MCF 10A (cell line): ENCODE measurements at regions of chr12 and their contacts with region 1.

Region 1: GRCh38 chr12:65948320-65949008 is 124.2 kb downstream of the HMGA2 start:
- DNase-seq: peak; percentile 98
- H3K4me3 Mint-ChIP-seq: peak overlapping the region; percentile 68
- H3K27ac Mint-ChIP-seq: peak overlapping the region; percentile 96
- H3K4me1 Mint-ChIP-seq: peaks cover 63% of the 10 kb centered on the region
- H3K27me3 Mint-ChIP-seq: no peaks in the 10 kb centered on the region
- CTCF ChIP-seq: no peak

Region 2: GRCh38 chr12:65830305-65830704 is 118.2 kb before region 1 on chr12:
- CTCF ChIA-PET with region 1: no interaction called
- POLR2A ChIA-PET with region 1: interaction called, 12 read pairs
- intact Hi-C with region 1: loop called (anchors 2 kb)
- DNase-seq: peak; percentile 41
- H3K4me3 Mint-ChIP-seq: peak overlapping the region; percentile 94
- H3K27ac Mint-ChIP-seq: peak overlapping the region; percentile 90
- H3K4me1 Mint-ChIP-seq: peaks cover 30% of the 10 kb centered on the region
- H3K27me3 Mint-ChIP-seq: no peaks in the 10 kb centered on the region
- CTCF ChIP-seq: no peak

Region 3: DNA sequence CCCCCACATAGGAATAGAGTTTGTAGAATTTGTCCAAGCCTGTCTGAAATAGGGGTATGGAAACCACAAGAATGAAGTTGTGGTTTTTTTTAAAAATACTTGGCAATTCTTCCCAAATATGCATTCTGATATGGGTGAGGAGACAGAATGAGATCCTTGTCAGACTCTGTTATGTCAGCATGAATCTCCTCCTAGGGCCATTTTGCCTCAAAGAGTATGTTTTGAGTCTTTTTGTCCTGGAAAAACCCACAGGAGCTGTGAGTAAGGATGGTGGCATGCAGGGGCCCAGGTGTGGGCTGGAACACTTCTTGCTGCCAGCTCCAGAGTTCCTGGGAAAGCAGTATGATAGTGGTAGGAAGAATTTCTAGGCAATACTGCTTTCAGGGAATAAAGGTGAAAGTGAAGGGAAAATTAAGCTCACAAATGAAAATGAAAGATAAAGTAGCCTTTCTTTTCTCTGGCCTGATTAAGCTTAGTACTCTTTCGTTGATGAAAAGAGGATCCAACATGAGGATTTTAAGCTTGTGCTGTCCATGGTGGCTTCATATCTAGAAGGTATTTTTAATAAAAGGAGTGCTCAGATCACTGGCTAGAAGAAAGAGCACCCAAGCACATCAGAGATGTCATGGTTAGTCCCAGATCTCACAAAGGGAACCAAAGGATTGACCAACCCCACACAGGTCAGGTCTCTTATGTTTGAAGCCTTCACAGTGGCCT is 51.3 kb after region 1 on chr12:
- CTCF ChIA-PET with region 1: no interaction called
- POLR2A ChIA-PET with region 1: no interaction called
- intact Hi-C with region 1: no loop called
- DNase-seq: peak; percentile 21
- H3K4me3 Mint-ChIP-seq: no peak overlapping the region
- H3K27ac Mint-ChIP-seq: no peak overlapping the region
- H3K4me1 Mint-ChIP-seq: peaks cover 6% of the 10 kb centered on the region
- H3K27me3 Mint-ChIP-seq: no peaks in the 10 kb centered on the region
- CTCF ChIP-seq: no peak

Region 4: DNA sequence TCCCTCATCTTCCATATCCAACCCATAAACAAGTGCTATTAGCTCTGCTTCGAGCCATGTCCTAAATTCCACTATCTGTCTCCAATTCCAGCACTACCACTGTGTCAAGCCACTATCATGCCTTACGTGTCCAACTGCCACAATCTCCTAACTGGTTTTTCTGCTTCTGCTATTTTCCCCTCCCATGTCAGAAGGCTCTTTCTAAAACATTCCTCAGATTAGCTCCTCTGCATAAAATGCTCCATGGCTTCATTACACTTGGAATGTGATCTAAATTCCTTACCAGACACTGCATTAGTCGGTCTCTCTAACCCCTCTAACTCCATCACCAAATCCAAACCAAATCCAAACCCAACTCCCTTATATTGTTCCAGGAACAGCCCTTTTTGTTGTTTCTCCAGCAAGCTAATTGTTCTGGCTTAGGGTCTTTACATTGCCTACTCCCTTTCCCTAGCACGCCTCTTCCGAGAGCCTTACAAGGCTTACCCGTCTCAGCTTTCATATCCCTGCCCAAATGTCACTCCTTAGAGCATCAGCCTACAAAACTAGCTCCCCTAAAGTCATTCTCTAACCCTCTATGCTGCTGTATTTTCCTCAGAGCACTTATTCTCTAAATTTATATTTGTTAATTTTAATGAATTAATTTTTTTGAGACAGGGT is 493.6 kb after region 1 on chr12:
- CTCF ChIA-PET with region 1: no interaction called
- POLR2A ChIA-PET with region 1: no interaction called
- intact Hi-C with region 1: no loop called
- DNase-seq: no peak
- H3K4me3 Mint-ChIP-seq: no peak overlapping the region
- H3K27ac Mint-ChIP-seq: no peak overlapping the region
- H3K4me1 Mint-ChIP-seq: no peaks in the 10 kb centered on the region
- H3K27me3 Mint-ChIP-seq: no peaks in the 10 kb centered on the region
- CTCF ChIP-seq: no peak